Heart left ventricle (tissue), 16 donors: ENCODE measurements at regions of chr18 and their contacts with region 1.

Region 1: DNA sequence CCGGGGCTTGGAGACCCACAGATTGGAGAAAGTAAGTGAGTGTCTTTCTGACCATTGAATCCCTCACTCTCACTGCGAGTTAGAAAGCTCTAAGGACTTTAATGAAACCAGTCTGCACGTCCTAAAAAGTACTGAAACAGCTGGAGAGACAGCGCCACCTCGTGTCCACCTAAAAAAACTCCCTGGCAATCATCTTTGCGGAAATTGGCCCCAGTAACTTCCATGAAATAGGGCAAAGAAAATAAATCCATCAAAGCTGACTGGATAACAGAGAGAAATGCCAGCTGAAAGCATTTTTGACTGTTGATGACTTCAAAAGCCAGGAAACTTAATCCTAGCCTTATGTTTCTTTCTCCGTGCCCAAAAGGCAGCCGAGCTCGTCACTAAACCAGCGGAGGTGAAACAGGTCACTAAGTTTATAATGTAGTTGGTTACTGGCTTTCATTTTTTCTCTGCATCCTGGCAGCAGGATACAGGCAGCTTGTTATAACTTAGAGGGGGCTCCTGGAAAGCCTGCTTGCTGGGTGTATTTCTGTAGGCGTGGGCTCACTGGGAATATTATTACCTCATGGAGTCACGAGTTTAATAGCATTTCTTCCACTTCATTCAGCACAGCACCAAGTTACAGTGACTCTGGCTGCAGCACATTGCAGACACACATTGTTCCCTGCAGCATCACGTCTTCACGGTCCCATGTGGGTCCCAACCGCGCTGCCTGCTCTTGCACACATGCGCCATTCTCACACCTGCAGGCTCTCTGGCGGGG is 266.5 kb downstream of the HRH4 start:
- DNase-seq: peak in 4 of 5 donors; percentile 56 to 72 (median 59)
- ATAC-seq: peak; percentile 36 to 78 (median 62)
- H3K4me3 ChIP-seq: peak overlapping the region in 8 of 12 donors; percentile 14 to 47 (median 26)
- H3K27ac ChIP-seq: peak overlapping the region in 2 of 12 donors; percentile 25 to 50
- H3K4me1 ChIP-seq: peaks cover 0 to 9% (median 0%) of the 10 kb centered on the region in 12 donors
- H3K27me3 ChIP-seq: peaks cover 0 to 9% (median 0%) of the 10 kb centered on the region in 9 donors
- CTCF ChIP-seq: peak; percentile 69 to 89 (median 83)
- POLR2A ChIP-seq: no peak

Region 2: GRCh38 chr18:24369426-24369825 is 357.5 kb before region 1 on chr18:
- intact Hi-C with region 1: loop called in 2 of 10 experiments (anchors 10 kb)
- DNase-seq: no peak
- ATAC-seq: no peak
- H3K4me3 ChIP-seq: no peak overlapping the region
- H3K27ac ChIP-seq: no peak overlapping the region
- H3K4me1 ChIP-seq: no peaks in the 10 kb centered on the region
- H3K27me3 ChIP-seq: no peaks in the 10 kb centered on the region
- CTCF ChIP-seq: no peak
- POLR2A ChIP-seq: no peak

Region 3: DNA sequence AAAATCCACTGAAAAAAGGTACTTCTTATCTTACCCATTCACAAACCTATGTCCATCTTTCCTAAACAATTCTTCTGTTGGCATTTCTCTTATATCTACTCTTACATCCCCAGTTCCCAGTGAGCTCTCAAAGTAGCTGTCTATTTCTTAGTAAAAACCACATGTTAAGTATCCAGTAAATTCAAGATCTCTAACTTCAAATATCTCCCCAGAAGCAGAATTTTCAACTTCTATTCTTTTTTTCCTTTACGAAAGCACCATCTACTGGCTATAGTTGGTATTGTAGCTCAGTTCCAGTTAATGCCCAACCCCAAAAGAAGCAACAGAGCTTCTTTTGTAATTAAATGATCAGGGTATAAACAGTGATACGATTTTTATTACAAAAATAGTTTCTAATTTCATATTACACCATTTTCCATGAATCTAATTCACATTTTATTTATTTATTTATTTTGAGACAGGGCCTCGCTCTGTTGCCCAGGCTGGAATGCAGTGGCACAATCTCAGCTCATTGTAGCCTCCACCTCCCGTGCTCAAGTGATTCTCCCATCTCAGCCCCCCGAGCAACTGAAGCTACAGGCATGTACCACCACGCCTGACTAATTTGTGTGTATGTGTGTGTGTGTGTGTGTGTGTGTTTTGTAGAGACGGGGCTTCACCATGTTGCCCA is 238.0 kb before region 1 on chr18:
- intact Hi-C with region 1: loop called (anchors 5 to 10 kb)
- DNase-seq: no peak
- ATAC-seq: peak in 1 of 4 donors; percentile 61
- H3K4me3 ChIP-seq: no peak overlapping the region
- H3K27ac ChIP-seq: no peak overlapping the region
- H3K4me1 ChIP-seq: peaks cover 0 to 6% (median 0%) of the 10 kb centered on the region in 12 donors
- H3K27me3 ChIP-seq: no peaks in the 10 kb centered on the region
- CTCF ChIP-seq: peak; percentile 75 to 86 (median 83)
- POLR2A ChIP-seq: no peak

Region 4: DNA sequence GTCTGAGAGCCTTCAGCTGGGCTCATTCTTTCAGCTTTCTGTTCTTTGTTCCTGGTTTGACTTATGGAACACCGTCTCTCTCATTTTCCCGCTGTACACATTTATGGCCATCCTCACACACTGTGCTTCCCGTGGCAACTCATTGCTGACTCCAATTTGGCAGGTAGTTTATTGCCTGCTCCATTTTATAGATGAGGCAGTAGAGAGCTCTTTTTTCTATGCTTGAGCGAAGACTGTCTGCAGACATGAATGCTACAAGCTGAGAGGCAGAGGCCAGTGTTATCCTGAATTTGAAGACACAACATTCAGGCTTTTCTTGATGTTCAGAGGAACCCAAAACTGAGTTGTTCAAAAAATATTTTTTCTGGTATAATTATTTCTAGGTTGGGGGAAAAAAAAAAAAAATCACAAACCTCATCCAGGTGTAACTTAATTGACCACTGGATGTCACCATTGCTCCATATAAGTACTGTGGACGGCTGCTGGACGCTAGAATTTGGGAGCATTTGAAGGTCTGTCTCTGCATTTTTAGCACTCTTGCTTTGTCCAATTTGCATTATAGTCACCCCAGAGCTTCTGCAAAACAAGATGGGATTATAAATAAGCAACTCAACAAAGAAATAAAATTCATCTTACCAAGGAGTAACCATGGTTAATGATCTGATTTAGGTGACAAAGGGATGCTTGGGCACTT is 183.0 kb before region 1 on chr18:
- intact Hi-C with region 1: loop called in 6 of 10 experiments (anchors 2 to 10 kb)
- DNase-seq: no peak
- ATAC-seq: no peak
- H3K4me3 ChIP-seq: no peak overlapping the region
- H3K27ac ChIP-seq: no peak overlapping the region
- H3K4me1 ChIP-seq: no peaks in the 10 kb centered on the region
- H3K27me3 ChIP-seq: peaks cover 0 to under 1% (median 0%) of the 10 kb centered on the region in 9 donors
- CTCF ChIP-seq: peak in 11 of 12 donors; percentile 9 to 50 (median 40)
- POLR2A ChIP-seq: no peak

Region 5: GRCh38 chr18:24600076-24600654 is 126.7 kb before region 1 on chr18:
- intact Hi-C with region 1: loop called (anchors 1 to 5 kb)
- DNase-seq: peak in 1 of 5 donors; percentile 17
- ATAC-seq: peak in 1 of 4 donors; percentile 50
- H3K4me3 ChIP-seq: no peak overlapping the region
- H3K27ac ChIP-seq: no peak overlapping the region
- H3K4me1 ChIP-seq: no peaks in the 10 kb centered on the region
- H3K27me3 ChIP-seq: peaks cover 0 to 4% (median 0%) of the 10 kb centered on the region in 9 donors
- CTCF ChIP-seq: peak; percentile 50 to 80 (median 72)
- POLR2A ChIP-seq: no peak

Region 6: DNA sequence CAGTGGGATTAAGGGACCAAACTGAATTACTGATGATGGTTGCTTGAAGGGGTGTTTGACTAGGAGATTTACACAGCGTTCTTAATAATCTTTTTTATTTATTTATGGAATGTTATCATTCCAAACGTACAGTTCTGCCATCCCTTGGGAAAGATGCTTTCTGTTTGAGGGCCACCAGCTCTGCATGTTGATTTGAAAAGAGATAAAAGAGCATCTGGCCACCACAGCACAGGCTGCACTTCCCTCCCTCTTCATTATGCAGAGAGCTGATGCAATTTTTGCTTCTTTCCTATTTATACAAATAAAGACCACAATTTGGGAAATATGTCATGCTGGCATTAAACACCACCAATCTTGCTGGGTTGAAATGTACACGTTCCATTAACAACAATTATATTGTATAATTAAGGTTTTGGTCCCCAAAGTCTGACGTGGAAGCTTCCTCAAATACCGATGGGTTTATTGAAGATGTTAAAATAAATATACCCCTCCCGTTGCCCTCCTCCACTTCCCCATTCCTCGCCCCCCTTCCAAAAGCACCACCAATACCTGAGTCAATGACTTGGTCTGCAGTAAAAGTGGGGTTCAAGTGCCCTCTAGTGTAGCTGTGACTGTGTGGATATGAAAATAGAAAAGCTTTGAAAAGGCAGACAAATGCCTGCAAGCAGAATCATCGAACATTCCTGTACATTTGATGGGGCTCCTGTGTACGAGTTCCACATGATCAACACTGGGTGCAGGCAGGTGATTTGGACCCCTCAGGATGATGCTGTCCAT is 54.6 kb before region 1 on chr18:
- intact Hi-C with region 1: loop called in 1 of 10 experiments (anchors 10 kb)
- DNase-seq: no peak
- ATAC-seq: no peak
- H3K4me3 ChIP-seq: no peak overlapping the region
- H3K27ac ChIP-seq: no peak overlapping the region
- H3K4me1 ChIP-seq: no peaks in the 10 kb centered on the region
- H3K27me3 ChIP-seq: no peaks in the 10 kb centered on the region
- CTCF ChIP-seq: peak in 6 of 12 donors; percentile 8 to 37 (median 24)
- POLR2A ChIP-seq: no peak

Region 7: DNA sequence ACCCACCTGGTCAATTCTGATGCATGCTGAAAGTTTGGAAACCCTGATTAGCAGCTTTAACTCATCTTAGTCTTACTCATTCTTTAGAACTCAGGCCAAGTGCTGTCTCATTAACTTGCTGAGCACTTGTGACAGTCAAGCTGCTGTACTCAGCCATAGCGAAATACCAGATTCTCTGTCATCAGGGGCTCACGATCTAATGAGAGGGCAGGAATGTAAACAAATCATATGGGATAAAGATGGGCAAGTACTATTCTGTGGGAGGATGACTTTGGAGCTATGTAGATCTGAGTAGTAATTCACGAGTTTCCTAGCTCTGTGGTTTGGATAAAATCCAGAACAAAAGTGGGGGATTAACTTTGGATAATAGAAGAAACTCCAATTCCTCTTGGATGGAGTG is 110.2 kb after region 1 on chr18:
- intact Hi-C with region 1: no loop called
- DNase-seq: no peak
- ATAC-seq: peak in 1 of 4 donors; percentile 34
- H3K4me3 ChIP-seq: no peak overlapping the region
- H3K27ac ChIP-seq: no peak overlapping the region
- H3K4me1 ChIP-seq: no peaks in the 10 kb centered on the region
- H3K27me3 ChIP-seq: peaks cover 0 to 11% (median 0%) of the 10 kb centered on the region in 9 donors
- CTCF ChIP-seq: no peak
- POLR2A ChIP-seq: no peak